HCT116 (cell line): ENCODE measurements at regions of chr19 and their contacts with region 1.

Region 1: DNA sequence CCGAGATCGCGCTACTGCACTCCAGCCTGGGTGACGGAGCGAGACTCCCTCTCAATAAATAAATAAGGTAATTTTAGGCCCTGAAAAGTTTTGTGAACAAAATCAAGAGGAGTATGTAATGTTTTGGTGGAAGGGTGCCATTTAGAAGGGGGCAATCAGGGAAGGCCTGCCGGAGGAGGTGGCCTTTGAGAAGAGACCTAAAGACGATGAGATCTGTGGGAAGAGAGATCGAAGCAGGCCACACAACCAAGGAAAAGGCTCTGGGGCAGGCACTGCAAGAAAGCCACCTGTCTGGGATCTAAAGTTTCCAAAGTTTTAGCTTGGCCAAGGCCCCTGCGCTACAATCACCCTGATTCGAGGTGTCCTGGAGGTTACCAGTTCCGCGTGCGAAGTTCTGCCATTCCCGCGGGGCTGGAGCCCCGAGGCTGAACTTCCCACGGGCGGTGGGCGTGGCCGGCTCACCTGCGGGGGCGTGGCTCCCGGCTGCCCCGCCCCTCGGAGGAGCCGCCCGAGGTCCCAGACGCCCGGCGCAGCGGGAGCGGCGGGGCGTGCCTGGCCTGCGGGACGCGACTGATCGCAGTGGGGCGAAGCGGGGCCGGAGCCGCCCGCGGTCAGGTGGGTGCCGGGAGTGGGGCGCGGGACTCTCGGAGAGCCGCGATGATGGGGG is at the start of gene KLC3:
- DNase-seq: peak; percentile 27
- ATAC-seq: peak; percentile 72
- H3K4me3 ChIP-seq: peak within 1 kb of the TSS; percentile 67 to 81
- H3K27ac ChIP-seq: peak within 1 kb of the TSS; percentile 30; the same call in 1 of the 2 replicates
- H3K4me1 ChIP-seq: peaks cover 23 to 55% of the 10 kb centered on the region in 2 experiments
- H3K27me3 ChIP-seq: no peaks in the 10 kb centered on the region
- CTCF ChIP-seq: no peak
- POLR2A ChIP-seq: peak; percentile 55
- RAD21 ChIP-seq: no peak
- total RNA-seq, gene KLC3: 22.8 TPM

Region 2: DNA sequence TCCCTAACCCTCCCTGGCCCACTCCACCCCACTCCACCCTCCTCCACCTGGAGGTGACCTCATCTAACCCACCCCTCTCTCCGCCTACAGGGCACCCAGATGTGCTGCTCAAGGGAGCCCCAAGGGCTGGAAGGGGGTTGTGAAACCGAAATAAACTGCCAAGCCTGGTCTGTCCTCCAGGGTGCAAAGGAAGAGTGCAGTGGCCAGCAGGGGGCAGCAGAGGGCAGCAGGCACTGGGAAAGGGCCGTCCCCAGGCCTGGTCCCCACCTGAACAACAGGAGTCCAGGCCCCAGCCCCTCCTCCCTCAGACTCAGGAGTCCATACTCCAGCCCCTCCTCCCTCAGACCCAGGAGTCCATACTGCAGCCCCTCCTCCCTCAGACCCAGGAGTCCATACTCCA is 539.9 kb before region 1 on chr19:
- CTCF ChIA-PET with region 1: no interaction called
- POLR2A ChIA-PET with region 1: no interaction called
- RAD21 ChIA-PET with region 1: no interaction called
- intact Hi-C with region 1: loop called (anchors 5 kb)
- DNase-seq: no peak
- ATAC-seq: peak; percentile 97
- H3K4me3 ChIP-seq: no peak overlapping the region
- H3K27ac ChIP-seq: no peak overlapping the region; the same call in 1 of the 2 replicates
- H3K4me1 ChIP-seq: peaks cover 3 to 9% of the 10 kb centered on the region in 2 experiments; a peak in 3 of 4 replicates
- H3K27me3 ChIP-seq: no peaks in the 10 kb centered on the region
- CTCF ChIP-seq: peak; percentile 91 to 99 (median 92)
- POLR2A ChIP-seq: no peak
- RAD21 ChIP-seq: peak; percentile 75

Region 3: GRCh38 chr19:45016388-45017319 is 323.7 kb before region 1 on chr19:
- CTCF ChIA-PET with region 1: no interaction called
- POLR2A ChIA-PET with region 1: no interaction called
- RAD21 ChIA-PET with region 1: no interaction called
- intact Hi-C with region 1: loop called (anchors 2 kb)
- DNase-seq: peak; percentile 42
- ATAC-seq: peak; percentile 89
- H3K4me3 ChIP-seq: no peak overlapping the region
- H3K27ac ChIP-seq: no peak overlapping the region
- H3K4me1 ChIP-seq: peaks cover 5 to 10% of the 10 kb centered on the region in 2 experiments; a peak in 2 of 4 replicates
- H3K27me3 ChIP-seq: no peaks in the 10 kb centered on the region
- CTCF ChIP-seq: peak; percentile 78 to 86 (median 79)
- POLR2A ChIP-seq: no peak
- RAD21 ChIP-seq: peak; percentile 87

Region 4: GRCh38 chr19:45079063-45079910 is 261.1 kb before region 1 on chr19 and contains the start of gene GEMIN7:
- CTCF ChIA-PET with region 1: no interaction called
- POLR2A ChIA-PET with region 1: interaction called, 3 read pairs
- RAD21 ChIA-PET with region 1: no interaction called
- intact Hi-C with region 1: loop called (anchors 5 kb)
- DNase-seq: peak; percentile 44
- ATAC-seq: peak; percentile 56
- H3K4me3 ChIP-seq: peak within 1 kb of the TSS; percentile 99
- H3K27ac ChIP-seq: peak within 1 kb of the TSS; percentile 73
- H3K4me1 ChIP-seq: peaks cover 31 to 45% of the 10 kb centered on the region in 2 experiments
- H3K27me3 ChIP-seq: no peaks in the 10 kb centered on the region
- CTCF ChIP-seq: no peak
- POLR2A ChIP-seq: no peak
- RAD21 ChIP-seq: no peak
- total RNA-seq, gene GEMIN7: 35.4 TPM

Region 5: DNA sequence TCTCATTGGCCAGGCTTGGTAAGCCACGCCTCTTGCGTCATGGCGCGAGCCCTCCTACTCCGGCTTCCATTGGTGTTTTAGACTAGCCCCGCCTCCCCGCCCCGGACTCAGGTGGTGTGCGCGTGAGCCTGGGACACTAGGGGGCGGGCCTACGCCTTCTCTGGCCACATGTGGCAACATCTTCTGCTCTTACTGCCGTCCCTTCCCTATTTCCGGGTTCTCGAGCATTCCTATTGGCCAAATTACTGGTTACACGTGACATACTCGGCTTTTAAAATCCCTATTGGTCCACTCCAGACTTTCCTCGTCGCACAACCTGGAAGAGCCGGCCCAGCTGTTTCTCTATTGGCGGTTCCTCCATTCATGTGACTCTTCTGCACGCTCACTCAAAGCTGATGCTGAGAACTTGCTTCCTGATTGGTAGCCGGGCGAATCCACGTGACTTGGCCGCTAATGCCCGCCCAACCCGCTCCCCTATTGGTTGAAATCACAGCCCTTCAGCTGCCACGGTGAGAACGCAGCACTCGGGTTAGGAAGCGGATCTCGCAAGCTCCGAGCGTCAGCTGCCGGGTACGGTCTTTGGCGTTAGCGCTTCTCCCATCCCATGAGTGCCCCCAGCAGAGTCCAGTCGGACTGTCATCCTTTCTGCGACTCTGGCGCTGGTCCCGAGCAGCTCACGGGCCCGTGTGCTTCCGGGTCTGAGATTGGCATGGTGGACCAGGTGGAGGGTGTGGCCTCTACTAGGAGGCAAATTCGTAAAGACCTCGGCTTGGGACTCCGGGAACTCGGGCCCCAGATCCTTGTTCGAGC is 161.9 kb before region 1 on chr19 and contains the start of gene BLOC1S3:
- CTCF ChIA-PET with region 1: interaction called, 12 read pairs
- POLR2A ChIA-PET with region 1: no interaction called
- RAD21 ChIA-PET with region 1: interaction called in 1 of 2 experiments, 4 read pairs
- intact Hi-C with region 1: loop called (anchors 2 kb)
- DNase-seq: peak; percentile 100
- ATAC-seq: peak; percentile 85
- H3K4me3 ChIP-seq: peak within 1 kb of the TSS; percentile 74 to 81
- H3K27ac ChIP-seq: peak within 1 kb of the TSS; percentile 93
- H3K4me1 ChIP-seq: peaks cover 14 to 25% of the 10 kb centered on the region in 2 experiments; a peak in 3 of 4 replicates
- H3K27me3 ChIP-seq: no peaks in the 10 kb centered on the region
- CTCF ChIP-seq: peak in 1 of 3 experiments; percentile 15; a peak in 1 of 6 replicates
- POLR2A ChIP-seq: peak; percentile 14
- RAD21 ChIP-seq: no peak
- total RNA-seq, gene BLOC1S3: 12.2 TPM

Region 6: DNA sequence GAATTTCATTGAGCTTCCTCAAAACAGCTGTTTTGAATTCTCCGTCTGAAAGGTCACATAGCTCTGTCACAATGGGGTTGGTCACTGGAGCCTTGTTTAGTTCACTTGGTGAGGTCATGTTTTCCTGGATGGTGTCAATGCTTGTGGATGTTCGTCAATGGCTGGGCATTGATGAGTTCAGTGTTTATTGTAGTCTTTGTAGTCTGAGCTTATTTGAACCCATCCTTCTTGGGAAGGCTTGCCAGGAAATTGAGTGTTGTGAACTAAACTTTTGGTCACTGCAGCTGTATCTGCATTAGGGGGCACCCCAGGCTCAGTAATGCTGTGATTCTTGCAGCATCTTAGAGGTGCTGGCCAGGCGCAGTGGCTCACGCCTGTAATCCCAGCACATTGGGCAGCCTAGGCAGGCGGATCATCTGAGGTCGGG is 139.8 kb before region 1 on chr19:
- CTCF ChIA-PET with region 1: interaction called, 7 read pairs
- POLR2A ChIA-PET with region 1: no interaction called
- RAD21 ChIA-PET with region 1: no interaction called
- intact Hi-C with region 1: loop called (anchors 1 kb)
- DNase-seq: no peak
- ATAC-seq: peak; percentile 69
- H3K4me3 ChIP-seq: no peak overlapping the region
- H3K27ac ChIP-seq: no peak overlapping the region
- H3K4me1 ChIP-seq: no peaks in the 10 kb centered on the region
- H3K27me3 ChIP-seq: no peaks in the 10 kb centered on the region
- CTCF ChIP-seq: peak in 2 of 3 experiments; percentile 33 to 37; a peak in 3 of 6 replicates
- POLR2A ChIP-seq: no peak
- RAD21 ChIP-seq: peak; percentile 70

Region 7: GRCh38 chr19:45245334-45245787 is 95.0 kb before region 1 on chr19 and contains the start of gene EXOC3L2:
- CTCF ChIA-PET with region 1: interaction called, 3 read pairs
- POLR2A ChIA-PET with region 1: no interaction called
- RAD21 ChIA-PET with region 1: no interaction called
- intact Hi-C with region 1: loop called (anchors 2 kb)
- DNase-seq: no peak
- ATAC-seq: no peak
- H3K4me3 ChIP-seq: no peak within 1 kb of the TSS
- H3K27ac ChIP-seq: no peak within 1 kb of the TSS
- H3K4me1 ChIP-seq: peaks cover 4 to 11% of the 10 kb centered on the region in 2 experiments; a peak in 3 of 4 replicates
- H3K27me3 ChIP-seq: no peaks in the 10 kb centered on the region
- CTCF ChIP-seq: no peak
- POLR2A ChIP-seq: no peak
- RAD21 ChIP-seq: no peak
- total RNA-seq, gene EXOC3L2: not detected